Calu3 (cell line): ENCODE measurements at regions of chr16 and their contacts with region 1.

Region 1: GRCh38 chr16:75519881-75520280 is 16.0 kb downstream of the CHST5 start:
- DNase-seq: no peak
- H3K4me3 Mint-ChIP-seq: no peak overlapping the region
- H3K27ac Mint-ChIP-seq: no peak overlapping the region
- H3K4me1 Mint-ChIP-seq: peaks cover 10% of the 10 kb centered on the region
- H3K27me3 Mint-ChIP-seq: no peaks in the 10 kb centered on the region
- CTCF ChIP-seq: no peak

Region 2: DNA sequence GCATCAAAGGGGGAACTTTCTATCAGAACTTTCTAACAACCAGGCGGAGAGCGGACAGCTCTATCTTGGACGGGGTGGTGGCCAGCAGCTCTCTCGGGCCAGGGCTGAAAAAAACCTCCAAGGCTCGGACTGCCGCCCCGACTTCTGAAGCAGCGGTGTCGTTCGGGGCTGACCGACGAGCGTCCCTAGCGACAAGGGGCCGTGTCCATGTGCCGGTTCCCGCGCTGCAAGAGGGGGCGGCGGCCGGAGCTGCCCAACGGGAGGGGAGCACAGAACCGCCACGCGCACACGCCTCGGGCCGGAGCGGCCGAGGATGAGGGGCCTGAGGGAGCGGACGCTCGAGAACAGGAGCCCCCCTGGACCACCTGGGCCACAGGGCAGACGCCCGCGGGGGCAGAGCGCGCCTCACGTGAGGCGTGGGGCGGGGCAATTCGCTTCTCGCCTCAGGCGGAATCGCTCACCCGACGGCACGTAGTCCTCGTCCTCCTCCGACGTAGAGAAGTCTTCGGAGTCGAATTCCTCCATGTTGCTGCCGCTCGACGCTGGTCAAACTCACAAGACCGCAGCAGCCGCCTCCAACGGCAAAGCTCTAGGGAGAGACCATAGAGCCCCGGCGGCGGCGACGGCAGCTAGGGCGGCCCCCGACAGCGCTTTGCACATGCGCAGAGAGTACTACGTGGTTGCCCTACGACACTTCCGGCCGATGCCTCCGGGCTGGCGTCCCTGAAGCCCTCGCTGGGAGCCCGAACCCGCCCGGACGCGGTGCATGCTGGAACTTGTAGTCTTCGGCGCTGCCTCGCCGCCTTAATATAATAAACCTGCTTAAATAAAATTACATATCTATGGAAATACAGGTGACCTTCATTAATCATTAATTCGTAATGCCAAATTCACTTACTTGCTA is 86.8 kb before region 1 on chr16 and contains the start of gene CFDP1:
- CTCF ChIA-PET with region 1: interaction called, 28 read pairs
- intact Hi-C with region 1: no loop called
- DNase-seq: peak; percentile 97
- H3K4me3 Mint-ChIP-seq: peak within 1 kb of the TSS; percentile 85
- H3K27ac Mint-ChIP-seq: peak within 1 kb of the TSS; percentile 91
- H3K4me1 Mint-ChIP-seq: peaks cover 24% of the 10 kb centered on the region
- H3K27me3 Mint-ChIP-seq: no peaks in the 10 kb centered on the region
- CTCF ChIP-seq: no peak
- total RNA-seq, gene CFDP1: 64.1 and 70.9 TPM in 2 replicates

Region 3: GRCh38 chr16:75471723-75472633 is 47.9 kb before region 1 on chr16:
- CTCF ChIA-PET with region 1: interaction called, 12 read pairs
- intact Hi-C with region 1: loop called (anchors 1 kb)
- DNase-seq: peak; percentile 64
- H3K4me3 Mint-ChIP-seq: no peak overlapping the region
- H3K27ac Mint-ChIP-seq: no peak overlapping the region
- H3K4me1 Mint-ChIP-seq: peaks cover 9% of the 10 kb centered on the region
- H3K27me3 Mint-ChIP-seq: no peaks in the 10 kb centered on the region
- CTCF ChIP-seq: peak; percentile 55

Region 4: DNA sequence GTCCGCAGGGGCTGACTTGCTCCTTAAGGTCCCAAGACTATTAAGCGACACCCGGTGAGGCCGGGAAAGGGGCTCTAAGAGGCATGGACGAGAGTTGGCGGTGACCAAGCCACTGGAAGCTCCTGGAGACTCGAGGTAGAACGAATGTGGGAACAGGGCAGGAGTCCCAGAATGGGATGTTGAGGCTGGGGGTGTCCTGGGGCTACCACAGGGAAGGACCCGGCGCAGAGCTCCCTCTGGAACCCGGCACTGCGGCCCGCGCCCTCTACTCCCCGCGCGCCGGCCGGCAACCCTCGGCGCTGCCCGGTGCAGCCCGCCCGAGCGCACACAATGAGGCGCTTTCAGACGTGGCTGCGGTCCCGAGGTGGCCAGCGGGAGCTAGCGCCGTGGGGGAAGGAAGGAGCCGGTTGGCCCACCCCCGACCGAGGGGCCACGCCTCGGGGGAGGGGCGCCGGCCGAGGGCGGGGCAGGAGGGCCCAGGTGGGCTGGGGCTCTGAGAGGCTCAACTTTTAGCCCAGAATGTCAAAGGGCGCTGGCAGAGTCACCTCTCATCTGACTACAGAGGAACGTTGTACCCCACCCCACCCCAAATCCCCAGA is 24.7 kb before region 1 on chr16 and contains the start of gene CHST6:
- CTCF ChIA-PET with region 1: interaction called, 11 read pairs
- intact Hi-C with region 1: no loop called
- DNase-seq: peak; percentile 76
- H3K4me3 Mint-ChIP-seq: peak within 1 kb of the TSS; percentile 72
- H3K27ac Mint-ChIP-seq: peak within 1 kb of the TSS; percentile 54
- H3K4me1 Mint-ChIP-seq: peaks cover 6% of the 10 kb centered on the region
- H3K27me3 Mint-ChIP-seq: peaks cover 12% of the 10 kb centered on the region
- CTCF ChIP-seq: no peak
- total RNA-seq, gene CHST6: 3.3 and 4.3 TPM in 2 replicates

Region 5: DNA sequence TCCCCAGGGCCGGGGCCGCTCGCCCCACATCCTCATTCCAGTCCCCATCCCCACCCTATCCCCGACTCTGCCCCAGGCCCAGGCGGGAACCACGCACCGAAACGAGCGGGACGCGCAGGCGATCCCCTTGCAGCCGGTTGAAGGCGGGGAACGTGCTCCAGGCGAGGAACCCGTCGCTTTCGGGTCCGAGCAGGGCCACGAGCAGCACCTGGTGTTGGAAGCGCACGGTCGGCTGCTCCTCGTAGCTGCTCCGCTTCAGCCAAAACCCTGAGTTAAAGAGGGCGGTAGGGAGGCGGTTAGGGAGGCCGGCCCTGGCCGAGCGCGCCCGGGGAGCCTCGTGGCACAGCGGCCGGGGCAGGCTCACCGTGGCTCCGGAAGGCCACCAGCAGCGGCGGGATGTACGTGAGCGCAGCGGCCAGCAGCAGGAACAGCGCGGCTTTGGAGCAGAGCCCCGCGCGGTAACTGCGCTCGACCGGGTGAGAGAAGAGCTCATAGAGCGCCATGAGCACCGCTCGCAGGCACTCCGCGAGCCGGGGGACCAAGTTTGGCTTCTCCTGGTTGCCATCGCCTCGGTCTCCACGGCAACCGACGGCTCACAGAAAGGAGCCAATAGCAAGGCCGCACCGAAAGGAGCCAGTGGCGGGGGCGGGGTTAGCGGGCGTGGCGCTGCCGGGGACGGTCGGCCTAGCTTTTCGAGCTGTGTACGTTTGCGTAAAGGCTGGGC is 36.0 kb after region 1 on chr16 and contains the start of gene TMEM231:
- CTCF ChIA-PET with region 1: interaction called, 5 read pairs
- intact Hi-C with region 1: loop called (anchors 5 kb)
- DNase-seq: peak; percentile 98
- H3K4me3 Mint-ChIP-seq: peak within 1 kb of the TSS; percentile 91
- H3K27ac Mint-ChIP-seq: peak within 1 kb of the TSS; percentile 78
- H3K4me1 Mint-ChIP-seq: peaks cover 34% of the 10 kb centered on the region
- H3K27me3 Mint-ChIP-seq: no peaks in the 10 kb centered on the region
- CTCF ChIP-seq: no peak
- total RNA-seq, gene TMEM231: 17.6 and 23.8 TPM in 2 replicates

Region 6: DNA sequence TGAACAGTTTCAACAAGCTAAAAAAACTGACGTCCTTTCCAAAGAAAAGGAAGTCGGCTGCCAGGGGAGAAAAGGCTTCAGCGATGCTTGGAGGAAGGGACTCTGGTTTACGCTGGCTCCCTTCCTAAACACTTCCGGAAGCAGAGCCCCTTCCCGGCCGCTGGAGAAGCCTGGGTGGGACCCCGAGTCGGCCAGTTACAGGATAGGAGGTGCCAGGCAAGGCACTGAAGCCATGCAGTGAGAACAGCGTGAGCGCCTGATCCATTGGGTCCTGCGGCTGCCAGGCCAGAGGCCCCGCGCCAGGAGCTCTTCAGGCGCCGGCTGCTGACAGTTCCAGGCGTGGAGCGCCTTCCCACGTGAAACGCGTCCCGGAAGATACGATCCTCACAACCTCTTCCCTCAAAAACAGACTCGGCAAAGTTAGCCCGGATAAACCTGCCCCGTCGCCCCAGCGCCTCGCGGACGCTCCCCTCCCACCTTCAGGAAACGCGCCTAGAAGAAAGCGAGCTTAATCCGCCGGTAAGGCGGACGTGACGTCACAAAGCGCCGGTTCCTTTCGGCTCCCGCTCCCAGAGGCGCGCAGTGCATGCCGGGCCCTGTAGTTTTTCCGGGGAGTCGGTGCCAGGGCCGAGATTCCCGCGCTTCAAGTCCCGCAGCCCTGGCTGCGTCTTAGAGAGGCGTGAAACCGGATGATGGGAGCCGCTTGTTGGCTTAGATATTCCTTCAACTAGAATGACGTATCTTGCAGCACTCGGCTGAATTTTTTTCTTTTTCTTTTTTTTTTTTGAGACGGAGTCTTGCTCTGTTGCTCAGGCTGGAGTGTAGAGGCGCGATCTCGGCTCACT is 103.1 kb after region 1 on chr16 and contains the start of gene ADAT1:
- CTCF ChIA-PET with region 1: interaction called, 6 read pairs
- intact Hi-C with region 1: loop called (anchors 2 kb)
- DNase-seq: peak; percentile 98
- H3K4me3 Mint-ChIP-seq: peak within 1 kb of the TSS; percentile 90
- H3K27ac Mint-ChIP-seq: peak within 1 kb of the TSS; percentile 92
- H3K4me1 Mint-ChIP-seq: peaks cover 16% of the 10 kb centered on the region
- H3K27me3 Mint-ChIP-seq: no peaks in the 10 kb centered on the region
- CTCF ChIP-seq: no peak
- total RNA-seq, gene ADAT1: 90.4 and 111 TPM in 2 replicates

Region 7: DNA sequence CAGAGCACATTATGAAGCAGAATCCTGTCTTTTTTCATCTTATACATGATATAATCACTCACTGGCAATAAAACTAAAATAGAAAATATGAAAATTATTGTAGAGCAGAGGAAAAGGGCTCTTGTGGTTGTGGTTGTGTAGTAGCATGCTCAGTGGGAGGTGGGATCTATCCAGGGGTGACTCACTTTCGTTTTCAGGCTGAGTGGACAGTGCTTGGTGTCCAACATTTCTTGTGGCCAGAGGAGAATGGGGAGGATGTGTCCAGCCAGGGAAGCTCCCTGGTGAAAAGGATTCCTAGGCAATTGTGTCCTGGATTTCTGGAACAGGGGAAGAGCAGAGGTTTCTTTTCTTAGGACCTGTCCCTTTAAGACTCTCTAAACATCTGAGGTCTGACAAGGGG is 238.3 kb after region 1 on chr16:
- CTCF ChIA-PET with region 1: no interaction called
- intact Hi-C with region 1: no loop called
- DNase-seq: no peak
- H3K4me3 Mint-ChIP-seq: no peak overlapping the region
- H3K27ac Mint-ChIP-seq: no peak overlapping the region
- H3K4me1 Mint-ChIP-seq: no peaks in the 10 kb centered on the region
- H3K27me3 Mint-ChIP-seq: peaks cover 62% of the 10 kb centered on the region
- CTCF ChIP-seq: no peak